Activated CD8-positive, alpha-beta T cell treated with anti-CD3 and anti-CD28 coated beads for 36 hours (primary cell): ENCODE measurements at regions of chr16 and their contacts with region 1.

Region 1: DNA sequence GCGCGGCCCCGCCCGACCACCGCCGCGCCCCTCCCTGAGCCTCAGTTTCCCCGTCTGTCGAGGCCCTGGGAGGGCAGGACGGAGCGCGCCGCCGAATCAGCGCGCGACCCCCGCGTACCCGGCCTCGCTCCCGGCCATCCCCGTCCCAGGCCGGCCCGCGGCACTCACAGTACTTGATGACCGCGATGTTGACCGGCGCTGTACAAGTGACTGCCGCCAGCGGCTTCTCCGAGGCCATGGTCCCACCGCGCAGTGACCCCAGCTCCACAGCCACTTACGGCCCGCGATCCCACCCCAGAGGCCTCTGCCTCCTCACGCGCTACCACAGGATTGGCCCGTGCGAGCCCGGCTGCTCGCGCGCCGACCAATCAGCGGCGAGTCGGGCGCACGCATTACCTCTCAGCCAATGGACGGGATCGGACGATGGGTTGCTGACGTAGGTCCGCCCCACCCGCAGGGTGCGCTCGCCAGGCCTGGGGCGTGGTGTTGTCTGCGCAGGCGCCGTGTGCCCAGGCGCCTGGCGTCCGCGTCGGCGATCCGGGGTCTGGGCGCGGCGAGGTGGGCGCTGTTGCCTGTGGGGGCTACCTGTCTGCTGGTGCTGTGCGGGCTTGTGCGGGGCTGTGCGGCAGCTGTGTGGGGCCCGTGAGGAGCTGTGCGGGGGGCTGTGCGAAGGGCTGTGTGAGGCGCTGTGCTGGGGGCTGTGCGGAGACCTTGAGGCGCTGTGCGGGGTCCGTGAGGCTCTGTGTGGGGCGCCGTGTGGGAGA is at the start of gene MVD:
- DNase-seq: peak; percentile 97
- ATAC-seq: peak; percentile 98
- H3K4me3 Mint-ChIP-seq: peak within 1 kb of the TSS; percentile 96
- H3K27ac Mint-ChIP-seq: peak within 1 kb of the TSS; percentile 90
- H3K4me1 Mint-ChIP-seq: peaks cover 21% of the 10 kb centered on the region
- H3K27me3 Mint-ChIP-seq: no peaks in the 10 kb centered on the region
- CTCF ChIP-seq: no peak
- total RNA-seq, gene MVD: 83.1 to 89.9 TPM

Region 2: GRCh38 chr16:88700636-88701482 is 37.8 kb after region 1 on chr16:
- CTCF ChIA-PET with region 1: interaction called, 3 read pairs
- POLR2A ChIA-PET with region 1: interaction called, 20 read pairs
- intact Hi-C with region 1: no loop called
- DNase-seq: peak; percentile 99
- ATAC-seq: peak; percentile 79
- H3K4me3 Mint-ChIP-seq: peak overlapping the region; percentile 94
- H3K27ac Mint-ChIP-seq: peak overlapping the region; percentile 97
- H3K4me1 Mint-ChIP-seq: peaks cover 52% of the 10 kb centered on the region
- H3K27me3 Mint-ChIP-seq: no peaks in the 10 kb centered on the region
- CTCF ChIP-seq: no peak

Region 3: GRCh38 chr16:88770461-88771293 is 107.7 kb after region 1 on chr16:
- CTCF ChIA-PET with region 1: no interaction called
- POLR2A ChIA-PET with region 1: no interaction called
- intact Hi-C with region 1: no loop called
- DNase-seq: peak; percentile 78
- ATAC-seq: peak; percentile 90
- H3K4me3 Mint-ChIP-seq: peak overlapping the region; percentile 12
- H3K27ac Mint-ChIP-seq: peak overlapping the region; percentile 64
- H3K4me1 Mint-ChIP-seq: peaks cover 33% of the 10 kb centered on the region
- H3K27me3 Mint-ChIP-seq: no peaks in the 10 kb centered on the region
- CTCF ChIP-seq: no peak

Region 4: GRCh38 chr16:89073346-89074214 is 410.6 kb after region 1 on chr16:
- CTCF ChIA-PET with region 1: no interaction called
- POLR2A ChIA-PET with region 1: no interaction called
- intact Hi-C with region 1: no loop called
- DNase-seq: no peak
- ATAC-seq: no peak
- H3K4me3 Mint-ChIP-seq: no peak overlapping the region
- H3K27ac Mint-ChIP-seq: no peak overlapping the region
- H3K4me1 Mint-ChIP-seq: no peaks in the 10 kb centered on the region
- H3K27me3 Mint-ChIP-seq: no peaks in the 10 kb centered on the region
- CTCF ChIP-seq: no peak